Aorta (tissue), 5 donors: ENCODE measurements at regions of chr5 and their contacts with region 1.

Region 1: GRCh38 chr5:140244525-140245025 is 58.3 kb downstream of the PFDN1 start:
- DNase-seq: peak; percentile 95 to 96
- ATAC-seq: peak; percentile 88
- H3K4me3 ChIP-seq: no peak overlapping the region
- H3K27ac ChIP-seq: no peak overlapping the region
- H3K4me1 ChIP-seq: no peaks in the 10 kb centered on the region
- H3K27me3 ChIP-seq: no peaks in the 10 kb centered on the region

Region 2: DNA sequence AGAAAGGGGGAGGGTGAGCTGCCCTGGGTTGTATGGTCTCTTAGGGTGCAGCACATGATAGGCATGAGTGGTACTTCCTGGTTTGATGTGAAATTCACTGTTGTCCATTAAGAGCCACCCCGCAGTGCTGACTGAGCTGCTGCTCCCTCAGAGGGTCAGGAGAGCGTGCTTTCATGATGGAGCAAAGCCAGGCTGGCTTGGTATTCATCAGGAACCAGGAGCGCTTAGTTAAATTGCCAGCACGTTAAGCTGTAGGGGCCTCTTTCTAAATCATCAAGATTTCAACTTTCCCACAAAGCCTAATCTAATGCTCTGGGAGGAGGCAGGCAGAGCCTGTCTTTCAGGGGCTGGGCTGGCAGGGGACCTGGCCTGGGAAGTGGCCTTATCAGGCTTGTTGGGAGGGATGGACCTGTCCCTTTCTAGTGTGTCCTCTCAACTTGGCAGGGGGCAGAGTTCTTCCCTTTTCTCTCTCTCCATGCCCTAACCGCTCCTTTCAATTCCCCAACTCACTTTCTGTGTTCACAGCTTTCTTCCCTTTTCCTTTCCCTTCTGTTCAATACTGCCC is 61.7 kb before region 1 on chr5:
- intact Hi-C with region 1: no loop called
- DNase-seq: peak in 1 of 2 donors; percentile 60
- ATAC-seq: peak; percentile 58
- H3K4me3 ChIP-seq: no peak overlapping the region
- H3K27ac ChIP-seq: no peak overlapping the region
- H3K4me1 ChIP-seq: peaks cover 0 to 2% of the 10 kb centered on the region in 2 donors
- H3K27me3 ChIP-seq: no peaks in the 10 kb centered on the region

Region 3: GRCh38 chr5:140351609-140352334 is 107.2 kb after region 1 on chr5:
- intact Hi-C with region 1: loop called (anchors 1 to 2 kb)
- DNase-seq: no peak
- ATAC-seq: peak; percentile 80
- H3K4me3 ChIP-seq: no peak overlapping the region
- H3K27ac ChIP-seq: no peak overlapping the region
- H3K4me1 ChIP-seq: no peaks in the 10 kb centered on the region
- H3K27me3 ChIP-seq: no peaks in the 10 kb centered on the region

Region 4: GRCh38 chr5:140357726-140358093 is 113.1 kb after region 1 on chr5:
- intact Hi-C with region 1: loop called (anchors 1 to 2 kb)
- DNase-seq: peak; percentile 88 to 94
- ATAC-seq: peak; percentile 96
- H3K4me3 ChIP-seq: no peak overlapping the region
- H3K27ac ChIP-seq: no peak overlapping the region
- H3K4me1 ChIP-seq: no peaks in the 10 kb centered on the region
- H3K27me3 ChIP-seq: no peaks in the 10 kb centered on the region

Region 5: GRCh38 chr5:140468188-140468587 is 223.6 kb after region 1 on chr5:
- intact Hi-C with region 1: no loop called
- DNase-seq: no peak
- ATAC-seq: no peak
- H3K4me3 ChIP-seq: no peak overlapping the region
- H3K27ac ChIP-seq: no peak overlapping the region
- H3K4me1 ChIP-seq: no peaks in the 10 kb centered on the region
- H3K27me3 ChIP-seq: no peaks in the 10 kb centered on the region